ENCODE measurements at regions of chr1 and their contacts with region 1.

Region 1: GRCh38 chr1:204363335-204364124 is 3.8 kb upstream of the PLEKHA6 start:
- DNase-seq: no peak
- H3K4me3 ChIP-seq: peak overlapping the region; percentile 27
- H3K27me3 ChIP-seq: no peaks in the 10 kb centered on the region
- CTCF ChIP-seq: peak; percentile 89

Region 2: GRCh38 chr1:203985044-203985443 is 378.5 kb before region 1 on chr1:
- CTCF ChIA-PET with region 1: no interaction called
- POLR2A ChIA-PET with region 1: no interaction called
- DNase-seq: no peak
- H3K4me3 ChIP-seq: no peak overlapping the region
- H3K27me3 ChIP-seq: 0 out of 2 replicates have a peak, but pooled peaks cover 1% of the 10 kb centered on the region
- CTCF ChIP-seq: no peak

Region 3: GRCh38 chr1:204128964-204129896 is 234.3 kb before region 1 on chr1:
- CTCF ChIA-PET with region 1: interaction called, 19 read pairs
- POLR2A ChIA-PET with region 1: no interaction called
- DNase-seq: no peak
- H3K4me3 ChIP-seq: no peak overlapping the region
- H3K27me3 ChIP-seq: no peaks in the 10 kb centered on the region
- CTCF ChIP-seq: peak; percentile 91

Region 4: GRCh38 chr1:204198151-204198994 is 165.2 kb before region 1 on chr1:
- CTCF ChIA-PET with region 1: interaction called, 13 read pairs
- POLR2A ChIA-PET with region 1: no interaction called
- DNase-seq: peak; percentile 61
- H3K4me3 ChIP-seq: no peak overlapping the region
- H3K27me3 ChIP-seq: no peaks in the 10 kb centered on the region
- CTCF ChIP-seq: 0 out of 2 replicates have a peak, but pooled peaks have one; percentile 17

Region 5: DNA sequence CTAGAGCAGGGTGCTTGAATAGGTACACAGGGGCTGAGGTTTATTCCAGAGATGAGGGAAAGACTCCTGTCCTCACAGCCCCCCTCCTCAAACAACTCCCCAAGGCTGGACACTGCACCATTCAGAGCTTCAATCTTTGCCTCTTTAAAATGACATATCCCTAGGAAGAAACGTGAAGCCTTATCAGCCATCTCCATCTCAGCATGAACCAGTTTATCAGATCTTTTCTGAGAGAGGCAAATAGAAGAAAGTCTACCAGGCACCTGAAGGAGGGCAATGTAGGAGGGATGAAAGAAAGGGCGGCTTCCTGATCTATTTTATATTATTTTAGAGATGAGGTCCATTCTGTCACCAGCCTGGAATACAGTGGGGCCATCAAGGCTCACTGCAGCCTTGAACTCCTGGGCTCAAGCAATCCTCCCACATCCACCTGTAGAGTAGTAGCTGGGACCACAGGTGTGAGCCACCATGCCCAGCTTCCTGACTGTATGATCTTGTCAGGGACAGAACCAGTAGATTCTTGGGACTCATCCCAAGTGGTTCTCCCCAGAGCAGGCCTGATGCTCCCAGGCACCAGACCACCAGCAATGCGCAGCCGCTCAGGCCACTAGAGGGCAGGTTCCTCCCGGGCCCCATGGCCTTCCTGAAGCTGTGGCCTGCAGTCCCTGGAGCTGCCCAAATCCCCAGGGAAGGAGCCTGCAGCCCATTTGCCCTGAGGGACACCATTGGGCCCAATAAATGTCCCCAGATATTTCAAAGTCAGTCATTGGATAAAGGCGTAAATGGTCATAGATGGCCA is 105.4 kb before region 1 on chr1:
- CTCF ChIA-PET with region 1: interaction called, 218 read pairs
- POLR2A ChIA-PET with region 1: no interaction called
- DNase-seq: no peak
- H3K4me3 ChIP-seq: no peak overlapping the region
- H3K27me3 ChIP-seq: no peaks in the 10 kb centered on the region
- CTCF ChIP-seq: peak; percentile 87

Region 6: DNA sequence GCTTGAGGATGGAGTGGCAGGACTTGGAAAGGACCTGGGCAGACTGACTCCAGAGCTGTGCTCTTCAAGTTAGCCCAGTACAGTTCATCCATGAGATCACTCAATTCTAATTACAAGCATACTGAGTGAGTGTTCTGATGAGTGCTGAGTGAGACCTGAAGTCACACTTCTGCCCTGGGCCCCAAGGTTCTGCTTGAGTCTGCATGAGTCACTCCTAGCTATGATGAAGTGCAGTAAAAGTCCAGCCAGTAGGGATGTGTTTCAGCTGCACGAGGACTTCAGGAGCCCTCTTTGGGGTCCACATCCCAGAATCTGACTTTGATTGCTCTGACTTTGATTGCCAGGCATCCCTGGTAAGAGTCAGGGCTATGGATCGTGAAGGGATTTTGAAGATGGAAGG is 39.6 kb before region 1 on chr1:
- CTCF ChIA-PET with region 1: interaction called, 10 read pairs
- POLR2A ChIA-PET with region 1: no interaction called
- DNase-seq: peak; percentile 22
- H3K4me3 ChIP-seq: no peak overlapping the region
- H3K27me3 ChIP-seq: no peaks in the 10 kb centered on the region
- CTCF ChIP-seq: no peak

Measured in BJ (cell line).